ENCODE measurements at regions of chr14 and their contacts with region 1.

Region 1: GRCh38 chr14:52835122-52835903 is 43.9 kb upstream of the GNPNAT1 start:
- DNase-seq: peak; percentile 57
- ATAC-seq: peak; percentile 98
- H3K4me3 ChIP-seq: peak overlapping the region; percentile 6 to 46
- H3K27ac ChIP-seq: peak overlapping the region; percentile 2; the same call in 1 of the 2 replicates
- H3K4me1 ChIP-seq: peaks cover 23 to 27% of the 10 kb centered on the region in 2 experiments
- H3K27me3 ChIP-seq: no peaks in the 10 kb centered on the region
- CTCF ChIP-seq: 0 out of 6 replicates have a peak, but pooled peaks of 1 of the 3 experiments have one; percentile 6
- POLR2A ChIP-seq: no peak
- RAD21 ChIP-seq: no peak

Region 2: GRCh38 chr14:52189330-52189729 is 646.0 kb before region 1 on chr14:
- CTCF ChIA-PET with region 1: no interaction called
- POLR2A ChIA-PET with region 1: no interaction called
- RAD21 ChIA-PET with region 1: no interaction called
- intact Hi-C with region 1: no loop called
- DNase-seq: no peak
- ATAC-seq: no peak
- H3K4me3 ChIP-seq: no peak overlapping the region
- H3K27ac ChIP-seq: no peak overlapping the region
- H3K4me1 ChIP-seq: no peaks in the 10 kb centered on the region
- H3K27me3 ChIP-seq: no peaks in the 10 kb centered on the region
- CTCF ChIP-seq: no peak
- POLR2A ChIP-seq: no peak
- RAD21 ChIP-seq: no peak

Region 3: GRCh38 chr14:53412803-53413675 is 577.7 kb after region 1 on chr14:
- CTCF ChIA-PET with region 1: no interaction called
- POLR2A ChIA-PET with region 1: no interaction called
- RAD21 ChIA-PET with region 1: interaction called in 1 of 2 experiments, 10 read pairs
- intact Hi-C with region 1: no loop called
- DNase-seq: no peak
- ATAC-seq: peak; percentile 91
- H3K4me3 ChIP-seq: no peak overlapping the region
- H3K27ac ChIP-seq: no peak overlapping the region
- H3K4me1 ChIP-seq: peaks cover 7 to 20% of the 10 kb centered on the region in 2 experiments
- H3K27me3 ChIP-seq: no peaks in the 10 kb centered on the region
- CTCF ChIP-seq: peak in 2 of 3 experiments; percentile 63 to 66; a peak in 4 of 6 replicates
- POLR2A ChIP-seq: no peak
- RAD21 ChIP-seq: peak; percentile 40; the same call in 1 of the 2 replicates

Measured in HCT116 (cell line).